ENCODE measurements at regions of chr16 and their contacts with region 1.

Region 1: GRCh38 chr16:12340151-12340733 is 363.7 kb downstream of the SNX29 start:
- DNase-seq: peak; percentile 68
- H3K4me3 Mint-ChIP-seq: no peak overlapping the region
- H3K27ac Mint-ChIP-seq: no peak overlapping the region
- H3K4me1 Mint-ChIP-seq: peaks cover 24% of the 10 kb centered on the region
- H3K27me3 Mint-ChIP-seq: no peaks in the 10 kb centered on the region
- CTCF ChIP-seq: peak; percentile 68

Region 2: GRCh38 chr16:12228602-12229499 is 111.4 kb before region 1 on chr16:
- CTCF ChIA-PET with region 1: interaction called, 12 read pairs
- intact Hi-C with region 1: loop called (anchors 1 kb)
- DNase-seq: peak; percentile 79
- H3K4me3 Mint-ChIP-seq: no peak overlapping the region
- H3K27ac Mint-ChIP-seq: no peak overlapping the region
- H3K4me1 Mint-ChIP-seq: peaks cover 25% of the 10 kb centered on the region
- H3K27me3 Mint-ChIP-seq: peaks cover 2% of the 10 kb centered on the region
- CTCF ChIP-seq: peak; percentile 81